ENCODE measurements at regions of chr22 and their contacts with region 1.

Region 1: GRCh38 chr22:23767673-23768548 is at the start of gene CHCHD10:
- DNase-seq: peak; percentile 93
- ATAC-seq: peak; percentile 86
- total RNA-seq, gene CHCHD10: 32.5 TPM

Region 2: GRCh38 chr22:23376256-23376655 is 391.7 kb before region 1 on chr22:
- intact Hi-C with region 1: no loop called
- DNase-seq: no peak
- ATAC-seq: peak; percentile 69

Region 3: DNA sequence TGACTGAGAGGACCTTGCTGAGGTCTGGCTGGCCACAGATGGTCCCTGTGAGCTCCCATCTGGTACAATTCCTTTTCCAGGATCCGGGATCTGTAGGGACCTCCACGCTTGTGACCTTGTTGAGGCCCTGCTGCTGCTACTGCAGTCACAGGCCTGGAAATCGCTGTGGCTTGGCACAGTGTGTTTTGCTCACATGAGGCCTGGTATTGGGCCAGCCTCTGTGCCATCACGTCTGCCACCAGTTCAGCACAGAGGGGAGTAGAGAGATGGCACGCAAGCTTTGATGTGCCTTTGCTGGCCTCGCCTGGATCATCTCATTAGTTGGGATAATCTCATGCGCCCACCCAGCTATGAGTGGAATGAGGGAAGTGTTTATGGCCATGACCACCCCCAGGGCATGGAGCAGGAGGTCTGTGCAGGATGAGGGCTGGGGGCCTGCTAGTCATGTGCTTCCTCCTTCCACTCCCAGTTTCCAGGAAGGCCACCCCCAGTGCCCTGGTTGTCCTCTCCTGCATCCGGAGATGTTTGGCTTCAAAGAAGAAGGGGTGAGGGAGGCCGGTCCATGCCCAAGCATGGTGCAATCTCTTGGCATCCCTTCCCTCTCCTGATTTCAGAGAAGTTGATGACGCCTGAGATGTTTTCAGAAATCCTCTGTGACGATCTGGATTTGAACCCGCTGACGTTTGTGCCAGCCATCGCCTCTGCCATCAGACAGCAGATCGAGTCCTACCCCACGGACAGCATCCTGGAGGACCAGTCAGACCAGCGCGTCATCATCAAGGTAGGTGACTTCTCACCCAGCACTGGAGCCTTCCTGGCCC is 48.5 kb after region 1 on chr22:
- intact Hi-C with region 1: no loop called
- DNase-seq: no peak
- ATAC-seq: no peak

Region 4: DNA sequence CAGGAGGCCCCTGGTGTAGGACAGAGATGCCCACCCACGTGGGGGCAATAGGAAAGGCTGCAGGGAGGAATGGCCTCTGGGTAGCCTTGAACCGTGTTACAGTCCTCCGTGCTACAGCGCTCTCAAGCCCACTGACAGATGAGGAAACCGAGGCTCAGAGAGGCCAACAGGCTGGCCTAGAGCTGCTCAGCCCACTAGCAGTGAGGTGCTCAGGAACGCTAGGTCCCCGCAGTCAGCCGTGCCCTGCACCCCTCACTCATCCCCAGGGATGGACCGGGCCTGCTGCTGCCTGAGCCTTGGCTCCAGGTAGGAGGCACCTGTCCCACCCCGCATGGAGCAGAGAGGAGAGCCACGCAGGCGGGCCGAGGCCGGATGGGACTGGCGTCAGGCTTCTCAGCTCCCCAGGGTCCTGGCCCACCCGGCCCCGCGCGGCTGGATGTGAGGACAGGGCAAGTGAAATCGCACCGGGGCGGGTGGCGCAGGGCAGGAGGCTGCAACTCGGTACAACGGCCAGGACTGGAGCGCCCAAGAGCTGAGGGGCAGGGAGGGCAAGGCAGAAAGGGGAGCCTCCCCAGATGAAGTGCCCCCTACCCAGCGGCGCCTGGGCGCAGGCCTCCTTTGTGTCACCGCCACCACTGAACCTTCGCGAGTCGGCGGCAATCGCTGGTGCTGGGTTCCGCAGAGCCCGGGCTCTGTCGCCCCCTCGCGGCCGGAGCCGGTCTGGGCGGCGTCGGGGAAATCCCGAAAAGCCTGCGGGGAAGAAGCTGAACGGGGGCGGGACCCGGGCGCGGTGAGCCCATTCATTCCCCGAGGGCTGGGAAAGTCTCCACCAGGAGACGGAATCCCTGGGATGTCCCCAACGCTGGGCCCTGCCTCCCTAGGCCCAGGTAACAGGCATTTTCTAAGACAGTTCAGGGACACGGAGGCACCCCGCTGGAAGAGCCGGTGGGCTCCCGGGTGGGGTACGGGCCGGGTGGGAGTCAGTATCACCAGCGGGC is 81.4 kb after region 1 on chr22:
- intact Hi-C with region 1: loop called (anchors 5 kb)
- DNase-seq: peak; percentile 92
- ATAC-seq: peak; percentile 76